ENCODE measurements at regions of chr3 and their contacts with region 1.

Region 1: GRCh38 chr3:170296703-170297102 is 60.8 kb upstream of the SKIL start:
- DNase-seq: peak; percentile 58
- H3K4me3 ChIP-seq: peak overlapping the region; percentile 8
- H3K27ac ChIP-seq: peak overlapping the region; percentile 35
- H3K4me1 ChIP-seq: peaks cover 18% of the 10 kb centered on the region
- CTCF ChIP-seq: no peak

Region 2: GRCh38 chr3:170233530-170233929 is 63.2 kb before region 1 on chr3:
- CTCF ChIA-PET with region 1: no interaction called
- POLR2A ChIA-PET with region 1: no interaction called
- intact Hi-C with region 1: loop called (anchors 5 kb)
- DNase-seq: no peak
- H3K4me3 ChIP-seq: no peak overlapping the region
- H3K27ac ChIP-seq: no peak overlapping the region
- H3K4me1 ChIP-seq: peaks cover 12% of the 10 kb centered on the region
- CTCF ChIP-seq: no peak

Region 3: DNA sequence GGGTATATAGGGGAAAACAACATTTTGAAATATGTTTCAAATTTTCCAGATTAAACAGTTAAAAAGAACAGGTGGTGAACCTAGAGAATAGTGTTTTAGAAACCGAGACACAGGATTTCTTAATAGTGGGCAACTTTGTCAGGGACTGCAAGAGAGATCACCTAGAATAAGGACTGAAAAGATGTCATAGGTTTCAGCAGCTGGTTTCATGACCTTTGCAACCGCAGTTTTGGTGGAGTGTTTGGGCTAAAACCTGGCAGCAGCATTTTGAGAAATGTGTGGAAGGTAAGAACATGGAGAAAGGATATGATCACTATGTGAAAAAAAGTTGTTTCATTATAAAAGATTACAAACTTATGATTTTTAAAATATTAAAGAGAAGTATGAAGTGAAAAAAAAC is 39.6 kb before region 1 on chr3:
- CTCF ChIA-PET with region 1: no interaction called
- POLR2A ChIA-PET with region 1: interaction called, 11 read pairs
- intact Hi-C with region 1: no loop called
- DNase-seq: peak; percentile 34
- H3K4me3 ChIP-seq: no peak overlapping the region
- H3K27ac ChIP-seq: peak overlapping the region; percentile 35
- H3K4me1 ChIP-seq: peaks cover 30% of the 10 kb centered on the region
- CTCF ChIP-seq: no peak

Measured in OCI-LY7 (cell line).